ENCODE measurements at regions of chr10 and their contacts with region 1.

Region 1: DNA sequence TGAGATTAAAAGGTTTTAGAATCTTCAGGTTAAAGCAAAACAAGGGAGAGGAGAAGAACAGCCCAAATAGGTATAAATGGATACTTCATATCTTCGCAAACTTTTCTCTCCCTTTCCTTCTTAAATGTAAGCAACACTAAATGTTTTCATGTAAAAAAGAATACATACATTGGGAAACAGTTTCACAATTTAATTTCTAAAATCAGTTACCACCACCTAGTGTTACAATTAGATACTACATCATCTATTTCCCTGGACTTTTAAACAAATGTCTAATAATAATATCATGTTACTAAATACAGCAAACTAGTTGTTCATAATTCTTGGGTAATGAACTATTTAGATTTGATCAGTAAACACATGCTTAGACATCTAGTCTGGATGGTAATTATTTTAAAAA is 35.8 kb downstream of the MINDY3 start:
- DNase-seq: no peak
- H3K4me3 ChIP-seq: no peak overlapping the region
- H3K27ac ChIP-seq: no peak overlapping the region
- H3K4me1 ChIP-seq: no peaks in the 10 kb centered on the region
- H3K27me3 ChIP-seq: no peaks in the 10 kb centered on the region
- CTCF ChIP-seq: peak; percentile 39 to 58 (median 51)
- EP300 ChIP-seq: no peak
- POLR2A ChIP-seq: no peak

Region 2: DNA sequence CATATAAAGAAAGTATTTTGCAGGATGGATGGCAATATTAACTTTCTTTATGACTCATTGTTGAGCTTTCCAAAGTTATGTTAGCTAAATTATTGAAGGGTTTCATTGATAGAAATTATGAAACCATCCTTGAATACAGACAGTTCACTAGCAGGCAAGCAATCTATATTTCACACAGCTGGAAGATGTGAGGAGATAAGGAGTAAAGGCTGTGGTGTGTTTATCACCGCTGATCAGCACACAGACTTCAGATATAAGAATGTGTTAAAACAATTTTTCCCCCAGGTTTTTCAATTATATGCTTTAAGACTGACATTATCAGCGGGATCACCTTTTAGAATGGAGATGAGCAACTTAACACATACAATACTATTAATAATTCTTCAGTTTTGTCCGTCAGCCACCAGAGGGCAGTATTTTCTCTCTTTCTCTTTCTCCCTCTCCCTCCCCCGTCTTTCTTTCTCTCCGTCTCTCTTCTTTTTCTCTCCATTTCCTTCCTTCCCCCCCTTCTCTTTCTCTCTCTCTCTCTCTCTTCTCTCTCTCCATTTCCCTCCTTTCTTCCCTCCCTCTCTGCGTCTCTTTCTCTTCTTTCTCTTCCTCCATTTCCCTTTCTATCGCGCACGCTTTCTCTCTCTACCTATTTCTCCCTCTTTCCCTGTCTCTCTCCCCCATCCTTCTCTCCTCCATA is 390.5 kb before region 1 on chr10:
- in situ Hi-C with region 1: loop called (anchors 10 to 25 kb)
- intact Hi-C with region 1: no loop called
- DNase-seq: no peak
- H3K4me3 ChIP-seq: peak overlapping the region in 2 of 4 donors; percentile 15 to 43
- H3K27ac ChIP-seq: no peak overlapping the region
- H3K4me1 ChIP-seq: no peaks in the 10 kb centered on the region
- H3K27me3 ChIP-seq: no peaks in the 10 kb centered on the region
- CTCF ChIP-seq: peak; percentile 71 to 79 (median 74)
- EP300 ChIP-seq: no peak
- POLR2A ChIP-seq: no peak

Region 3: GRCh38 chr10:15440204-15440711 is 384.2 kb before region 1 on chr10:
- in situ Hi-C with region 1: loop called (anchors 10 to 25 kb)
- intact Hi-C with region 1: loop called (anchors 10 kb)
- DNase-seq: no peak
- H3K4me3 ChIP-seq: no peak overlapping the region
- H3K27ac ChIP-seq: no peak overlapping the region
- H3K4me1 ChIP-seq: peaks cover 0 to 9% (median 0%) of the 10 kb centered on the region in 4 donors
- H3K27me3 ChIP-seq: no peaks in the 10 kb centered on the region
- CTCF ChIP-seq: no peak
- EP300 ChIP-seq: no peak
- POLR2A ChIP-seq: no peak

Region 4: DNA sequence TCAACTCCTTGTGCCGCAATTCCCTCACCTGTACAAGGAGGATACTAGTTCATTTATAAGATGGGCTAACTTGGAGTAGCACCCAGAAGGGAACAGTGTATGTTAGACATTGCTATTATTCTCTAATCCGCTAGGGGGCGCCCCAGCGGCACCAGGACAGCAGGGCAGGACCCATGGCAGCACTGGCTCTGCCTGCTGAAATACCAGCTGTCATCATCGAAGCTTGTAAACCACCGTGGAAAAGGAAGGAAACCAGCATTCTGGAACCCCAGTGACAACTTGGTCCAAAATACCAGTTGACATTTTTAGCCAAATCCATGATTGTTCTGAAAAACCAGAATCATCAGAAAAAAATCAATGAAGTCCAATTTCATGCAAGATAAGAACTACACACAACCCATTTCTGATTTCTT is 239.2 kb before region 1 on chr10:
- in situ Hi-C with region 1: loop called in 1 of 4 experiments (anchors 10 kb)
- intact Hi-C with region 1: no loop called
- DNase-seq: peak; percentile 70
- H3K4me3 ChIP-seq: no peak overlapping the region
- H3K27ac ChIP-seq: no peak overlapping the region
- H3K4me1 ChIP-seq: no peaks in the 10 kb centered on the region
- H3K27me3 ChIP-seq: peaks cover 2% of the 10 kb centered on the region
- CTCF ChIP-seq: peak; percentile 40 to 74 (median 60)
- EP300 ChIP-seq: no peak
- POLR2A ChIP-seq: no peak

Region 5: GRCh38 chr10:15712883-15713282 is 111.6 kb before region 1 on chr10:
- in situ Hi-C with region 1: no loop called
- intact Hi-C with region 1: no loop called
- DNase-seq: no peak
- H3K4me3 ChIP-seq: no peak overlapping the region
- H3K27ac ChIP-seq: no peak overlapping the region
- H3K4me1 ChIP-seq: no peaks in the 10 kb centered on the region
- H3K27me3 ChIP-seq: peaks cover 9% of the 10 kb centered on the region
- CTCF ChIP-seq: no peak
- EP300 ChIP-seq: no peak
- POLR2A ChIP-seq: no peak

Region 6: DNA sequence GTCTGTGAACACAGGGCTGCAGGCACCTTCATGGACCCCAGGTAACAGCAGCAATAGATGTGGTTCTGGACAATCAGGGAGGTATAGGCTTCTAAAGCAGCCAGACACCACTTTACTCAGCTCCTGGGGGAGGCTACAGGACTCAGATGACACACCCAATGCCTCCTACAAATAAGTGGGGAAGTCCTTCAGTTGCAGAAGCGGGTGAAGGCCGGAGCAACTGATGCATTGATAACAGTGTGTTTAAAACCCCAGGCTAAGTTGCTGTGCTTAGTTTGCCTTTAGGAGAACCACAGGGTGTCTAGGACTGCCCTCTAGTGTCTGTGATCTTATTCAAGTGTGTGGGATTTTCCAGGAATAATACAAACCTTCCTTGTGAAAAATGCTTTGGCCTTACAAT is 98.9 kb before region 1 on chr10:
- in situ Hi-C with region 1: loop called in 2 of 4 experiments (anchors 10 kb)
- intact Hi-C with region 1: no loop called
- DNase-seq: peak; percentile 12
- H3K4me3 ChIP-seq: no peak overlapping the region
- H3K27ac ChIP-seq: no peak overlapping the region
- H3K4me1 ChIP-seq: peaks cover 0 to 3% (median 0%) of the 10 kb centered on the region in 4 donors
- H3K27me3 ChIP-seq: peaks cover 10% of the 10 kb centered on the region
- CTCF ChIP-seq: peak; percentile 21 to 43 (median 39)
- EP300 ChIP-seq: no peak
- POLR2A ChIP-seq: no peak

Region 7: DNA sequence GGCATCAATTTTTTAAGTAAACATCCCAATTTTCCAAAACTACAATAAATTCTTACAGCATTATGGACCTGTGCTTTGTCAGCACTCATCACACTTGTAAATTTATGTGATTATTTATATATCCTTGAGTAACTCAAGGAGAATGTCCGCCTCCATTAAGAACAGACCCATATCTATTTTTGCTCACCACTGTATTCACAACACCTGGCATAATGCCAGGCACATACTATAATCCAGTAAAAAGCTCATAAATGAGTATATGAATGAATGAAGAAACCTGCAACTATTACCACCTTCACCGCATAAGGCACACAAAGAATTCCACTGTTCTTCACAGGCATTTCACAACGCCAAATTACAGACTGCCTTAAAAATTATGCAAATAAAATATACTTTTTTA is 11.1 kb before region 1 on chr10:
- in situ Hi-C with region 1: no loop called
- intact Hi-C with region 1: no loop called
- DNase-seq: no peak
- H3K4me3 ChIP-seq: no peak overlapping the region
- H3K27ac ChIP-seq: no peak overlapping the region
- H3K4me1 ChIP-seq: peaks cover 0 to 20% (median 7%) of the 10 kb centered on the region in 4 donors
- H3K27me3 ChIP-seq: no peaks in the 10 kb centered on the region
- CTCF ChIP-seq: no peak
- EP300 ChIP-seq: no peak
- POLR2A ChIP-seq: no peak

Region 8: DNA sequence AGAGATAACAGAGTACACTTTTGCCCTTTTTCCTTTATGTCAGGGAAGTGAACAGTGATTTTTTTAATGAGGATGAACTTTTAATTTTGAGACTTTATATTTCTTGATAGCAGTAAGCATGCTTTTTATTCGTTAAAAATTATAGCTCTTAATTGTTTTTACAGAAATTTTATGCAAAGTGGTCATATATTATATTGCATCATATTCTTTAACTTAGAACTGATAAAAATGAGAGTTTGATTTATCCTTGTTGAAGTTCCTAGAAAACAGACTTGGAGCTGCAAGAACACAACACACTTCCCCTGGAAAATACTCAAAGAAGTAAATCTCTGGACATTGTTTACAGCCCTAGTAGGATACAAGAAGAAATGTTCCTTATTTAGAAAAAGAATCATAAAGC is 57.0 kb after region 1 on chr10:
- in situ Hi-C with region 1: no loop called
- intact Hi-C with region 1: no loop called
- DNase-seq: no peak
- H3K4me3 ChIP-seq: no peak overlapping the region
- H3K27ac ChIP-seq: no peak overlapping the region
- H3K4me1 ChIP-seq: no peaks in the 10 kb centered on the region
- H3K27me3 ChIP-seq: peaks cover 13% of the 10 kb centered on the region
- CTCF ChIP-seq: no peak
- EP300 ChIP-seq: no peak
- POLR2A ChIP-seq: no peak

Region 9: DNA sequence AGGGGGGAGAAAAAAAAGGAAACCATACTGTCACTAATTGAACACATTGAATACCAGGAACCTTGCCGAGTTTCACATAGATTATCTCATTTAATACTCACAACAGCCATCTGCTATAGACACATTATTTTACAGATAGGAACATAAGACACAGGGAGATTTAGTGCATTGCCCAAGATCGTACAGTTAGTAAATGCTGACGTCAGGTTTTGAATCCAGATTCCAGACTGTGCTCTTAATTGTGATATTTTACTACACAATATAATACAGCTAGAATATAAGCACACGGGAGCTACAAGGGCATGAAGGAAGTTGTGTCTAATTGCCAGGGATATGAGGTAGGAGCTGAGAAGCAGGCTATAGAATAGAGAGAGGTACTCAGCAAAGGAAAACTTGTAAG is 129.7 kb after region 1 on chr10:
- in situ Hi-C with region 1: no loop called
- intact Hi-C with region 1: no loop called
- DNase-seq: no peak
- H3K4me3 ChIP-seq: no peak overlapping the region
- H3K27ac ChIP-seq: no peak overlapping the region
- H3K4me1 ChIP-seq: no peaks in the 10 kb centered on the region
- H3K27me3 ChIP-seq: no peaks in the 10 kb centered on the region
- CTCF ChIP-seq: no peak
- EP300 ChIP-seq: no peak
- POLR2A ChIP-seq: no peak

Measured in transverse colon (tissue), 4 donors.